ENCODE measurements at regions of chr15 and their contacts with region 1.

Region 1: DNA sequence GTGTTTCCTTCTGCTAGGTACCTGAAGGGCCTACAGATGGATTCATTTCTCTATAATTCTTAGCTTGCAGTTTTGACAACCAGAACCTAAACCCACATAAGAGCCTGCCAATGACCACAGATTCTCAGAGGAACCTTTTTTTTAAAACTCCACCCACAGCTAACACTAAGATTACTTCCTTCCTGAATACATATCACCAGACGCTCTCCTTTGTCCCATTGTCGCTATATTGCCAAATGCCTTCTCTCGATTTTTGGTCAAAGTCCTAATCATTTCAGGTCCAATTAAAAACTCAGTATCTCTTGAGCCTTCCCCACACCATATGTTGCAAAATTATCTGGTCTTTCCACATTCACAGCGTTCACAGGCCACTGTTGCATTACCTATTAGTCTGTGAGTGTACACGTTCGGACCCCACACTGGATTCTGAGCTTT is 12.4 kb downstream of the ZNF710 start:
- DNase-seq: peak in 7 of 35 experiments; percentile 29 to 76 (median 37)
- ATAC-seq: peak; percentile 91 to 95 (median 95)
- H3K4me3 ChIP-seq: peak overlapping the region; percentile 13 to 36
- H3K4me3 Mint-ChIP-seq: peak overlapping the region; percentile 40 to 62 (median 60)
- H3K27ac ChIP-seq: peak overlapping the region; percentile 34
- H3K27ac Mint-ChIP-seq: peak overlapping the region; percentile 59 to 69
- H3K4me1 ChIP-seq: peaks cover 14 to 47% of the 10 kb centered on the region in 2 experiments
- H3K4me1 Mint-ChIP-seq: peaks cover 57 to 66% (median 66%) of the 10 kb centered on the region in 3 donors
- H3K27me3 ChIP-seq: no peaks in the 10 kb centered on the region
- H3K27me3 Mint-ChIP-seq: no peaks in the 10 kb centered on the region

Region 2: DNA sequence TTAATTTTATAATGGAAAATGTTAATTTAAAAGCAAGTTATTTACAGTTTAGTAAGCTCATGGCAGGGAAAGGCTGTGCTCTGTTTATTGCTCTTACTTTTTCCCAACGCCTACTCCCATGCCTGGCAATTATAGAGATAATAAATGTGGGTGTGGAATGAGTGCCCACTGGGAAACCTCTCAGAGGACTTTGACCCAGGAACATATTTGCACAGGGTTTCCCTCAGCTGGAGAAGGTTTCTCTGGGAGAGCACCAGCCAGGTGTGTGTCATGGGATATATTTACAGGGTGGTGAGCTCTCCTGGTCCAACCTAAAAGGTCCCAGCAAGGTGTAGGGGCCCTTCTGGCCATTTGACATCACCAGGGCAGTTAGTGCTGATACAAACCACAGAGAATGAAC is 15.5 kb after region 1 on chr15:
- CTCF ChIA-PET with region 1: interaction called in 1 of 2 experiments, 4 read pairs
- POLR2A ChIA-PET with region 1: interaction called, 3 to 12 read pairs
- DNase-seq: no peak
- ATAC-seq: no peak
- H3K4me3 ChIP-seq: no peak overlapping the region
- H3K4me3 Mint-ChIP-seq: no peak overlapping the region
- H3K27ac ChIP-seq: no peak overlapping the region
- H3K27ac Mint-ChIP-seq: no peak overlapping the region
- H3K4me1 ChIP-seq: peaks cover 10 to 26% of the 10 kb centered on the region in 2 experiments
- H3K4me1 Mint-ChIP-seq: peaks cover 41 to 51% (median 47%) of the 10 kb centered on the region in 3 donors
- H3K27me3 ChIP-seq: no peaks in the 10 kb centered on the region
- H3K27me3 Mint-ChIP-seq: no peaks in the 10 kb centered on the region

Measured in T-cell (primary cell).